ENCODE measurements at regions of chr3 and their contacts with region 1.

Region 1: GRCh38 chr3:94349310-94349878 is 286.5 kb downstream of the NSUN3 start:
- DNase-seq: no peak
- H3K4me3 ChIP-seq: no peak overlapping the region
- H3K27ac ChIP-seq: no peak overlapping the region
- H3K4me1 ChIP-seq: no peaks in the 10 kb centered on the region
- H3K27me3 ChIP-seq: no peaks in the 10 kb centered on the region
- CTCF ChIP-seq: no peak
- EP300 ChIP-seq: no peak
- POLR2A ChIP-seq: no peak

Region 2: GRCh38 chr3:94015025-94015424 is 334.4 kb before region 1 on chr3:
- intact Hi-C with region 1: no loop called
- DNase-seq: no peak
- H3K4me3 ChIP-seq: no peak overlapping the region
- H3K27ac ChIP-seq: no peak overlapping the region
- H3K4me1 ChIP-seq: no peaks in the 10 kb centered on the region
- H3K27me3 ChIP-seq: no peaks in the 10 kb centered on the region
- CTCF ChIP-seq: no peak
- EP300 ChIP-seq: no peak
- POLR2A ChIP-seq: no peak

Region 3: GRCh38 chr3:94398036-94398435 is 48.6 kb after region 1 on chr3:
- intact Hi-C with region 1: loop called in 1 of 4 experiments (anchors 10 kb)
- DNase-seq: no peak
- H3K4me3 ChIP-seq: no peak overlapping the region
- H3K27ac ChIP-seq: no peak overlapping the region
- H3K4me1 ChIP-seq: no peaks in the 10 kb centered on the region
- H3K27me3 ChIP-seq: no peaks in the 10 kb centered on the region
- CTCF ChIP-seq: no peak
- EP300 ChIP-seq: no peak
- POLR2A ChIP-seq: no peak